ENCODE measurements at regions of chr3 and their contacts with region 1.

Region 1: GRCh38 chr3:169272532-169272931 is 391.0 kb downstream of the MECOM start:
- DNase-seq: no peak
- ATAC-seq: no peak
- H3K4me3 ChIP-seq: no peak overlapping the region
- H3K4me3 Mint-ChIP-seq: no peak overlapping the region
- H3K27ac ChIP-seq: no peak overlapping the region
- H3K27ac Mint-ChIP-seq: no peak overlapping the region
- H3K4me1 ChIP-seq: no peaks in the 10 kb centered on the region
- H3K4me1 Mint-ChIP-seq: no peaks in the 10 kb centered on the region
- H3K27me3 ChIP-seq: no peaks in the 10 kb centered on the region
- H3K27me3 Mint-ChIP-seq: no peaks in the 10 kb centered on the region
- CTCF ChIP-seq: no peak

Region 2: GRCh38 chr3:167587651-167588050 is 1684.9 kb before region 1 on chr3:
- CTCF ChIA-PET with region 1: no interaction called
- POLR2A ChIA-PET with region 1: no interaction called
- intact Hi-C with region 1: no loop called
- DNase-seq: no peak
- ATAC-seq: no peak
- H3K4me3 ChIP-seq: no peak overlapping the region
- H3K4me3 Mint-ChIP-seq: no peak overlapping the region
- H3K27ac ChIP-seq: no peak overlapping the region
- H3K27ac Mint-ChIP-seq: no peak overlapping the region
- H3K4me1 ChIP-seq: no peaks in the 10 kb centered on the region
- H3K4me1 Mint-ChIP-seq: no peaks in the 10 kb centered on the region
- H3K27me3 ChIP-seq: no peaks in the 10 kb centered on the region
- H3K27me3 Mint-ChIP-seq: no peaks in the 10 kb centered on the region
- CTCF ChIP-seq: no peak

Region 3: GRCh38 chr3:169234618-169235017 is 37.9 kb before region 1 on chr3:
- CTCF ChIA-PET with region 1: no interaction called
- POLR2A ChIA-PET with region 1: no interaction called
- intact Hi-C with region 1: loop called in 1 of 2 experiments (anchors 1 kb)
- DNase-seq: no peak
- ATAC-seq: no peak
- H3K4me3 ChIP-seq: no peak overlapping the region
- H3K4me3 Mint-ChIP-seq: no peak overlapping the region
- H3K27ac ChIP-seq: no peak overlapping the region
- H3K27ac Mint-ChIP-seq: no peak overlapping the region
- H3K4me1 ChIP-seq: no peaks in the 10 kb centered on the region
- H3K4me1 Mint-ChIP-seq: no peaks in the 10 kb centered on the region
- H3K27me3 ChIP-seq: no peaks in the 10 kb centered on the region
- H3K27me3 Mint-ChIP-seq: no peaks in the 10 kb centered on the region
- CTCF ChIP-seq: no peak